ENCODE measurements at regions of chr14 and their contacts with region 1.

Region 1: DNA sequence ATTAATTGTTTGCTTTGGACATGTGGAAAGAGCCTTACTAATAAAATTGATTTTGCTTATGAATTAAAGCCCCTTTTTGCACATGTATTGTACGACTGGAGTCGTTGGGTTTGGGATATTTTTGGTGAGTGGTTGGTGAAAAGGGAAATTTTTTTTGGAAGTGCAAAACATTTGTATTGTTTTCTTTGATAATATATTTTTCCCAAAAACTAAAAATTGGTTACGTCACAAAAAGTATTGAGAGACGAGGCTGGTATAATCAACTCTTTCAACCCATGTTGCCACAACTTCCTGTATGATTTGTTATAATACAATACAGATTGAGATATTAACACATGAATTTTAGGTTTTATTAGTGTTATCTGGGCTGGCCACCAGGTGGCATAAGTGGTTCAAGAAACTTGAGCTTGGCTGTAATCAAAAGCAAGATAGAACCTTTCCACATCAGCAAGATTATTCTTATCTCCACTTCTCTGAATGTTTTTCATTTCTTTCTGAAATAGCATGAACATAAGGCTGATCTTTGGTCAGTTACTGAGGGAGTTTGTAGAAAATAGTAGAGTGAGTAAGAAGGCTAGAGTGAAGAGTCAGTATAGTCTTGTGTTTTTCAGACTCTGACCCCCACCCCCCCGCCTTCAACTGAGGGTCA is 8.7 kb downstream of the NGDN start:
- DNase-seq: peak; percentile 41 to 65 (median 62)
- H3K4me3 ChIP-seq: no peak overlapping the region
- H3K27ac ChIP-seq: no peak overlapping the region
- H3K4me1 ChIP-seq: no peaks in the 10 kb centered on the region
- H3K27me3 ChIP-seq: no peaks in the 10 kb centered on the region
- CTCF ChIP-seq: peak; percentile 40 to 87 (median 64)
- EP300 ChIP-seq: no peak
- POLR2A ChIP-seq: no peak

Region 2: DNA sequence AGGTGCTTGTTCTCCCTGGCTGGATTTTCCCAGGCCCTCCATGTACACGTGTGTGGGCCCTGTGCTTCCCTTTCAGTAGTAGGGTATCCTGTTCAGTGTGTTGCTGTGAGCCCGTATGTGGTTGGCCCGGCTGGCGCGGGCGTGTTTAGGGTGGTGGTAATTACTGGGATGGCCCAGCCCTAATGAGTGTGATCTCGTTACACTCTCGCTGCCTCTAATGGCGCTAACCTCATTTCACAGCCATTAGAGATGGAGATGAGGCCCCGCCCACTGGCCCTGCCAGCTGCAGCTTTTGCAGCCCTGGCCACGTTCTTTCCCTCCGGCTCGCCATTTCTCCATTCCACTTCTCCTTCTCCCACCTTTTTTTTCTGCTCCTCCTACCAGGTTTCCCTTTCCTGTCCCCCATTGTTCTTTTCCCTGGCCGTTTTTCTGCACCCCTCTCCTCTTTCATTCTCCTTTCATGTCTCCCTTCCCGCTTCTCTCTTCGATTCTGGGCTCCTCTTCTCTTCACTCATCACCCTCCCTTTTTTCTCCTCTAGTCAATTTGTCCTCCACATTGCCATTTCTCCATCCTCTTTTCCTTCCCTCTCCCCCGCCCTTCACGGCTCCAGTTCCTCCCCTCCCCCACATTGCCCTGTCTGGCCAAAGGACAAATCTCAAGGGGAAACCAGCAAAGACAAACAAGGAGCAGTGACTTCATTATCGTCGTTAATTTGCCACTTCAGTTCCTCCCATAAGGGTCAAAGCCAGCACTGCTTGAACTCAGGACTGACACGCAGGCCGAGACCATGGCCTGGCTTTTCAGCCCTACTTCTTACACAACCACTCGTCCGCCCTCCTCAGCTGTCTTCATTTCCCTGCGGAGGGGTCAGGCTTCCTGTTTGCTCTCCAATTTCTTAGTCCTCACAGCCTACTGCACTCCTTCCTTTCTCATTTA is 66.5 kb after region 1 on chr14:
- intact Hi-C with region 1: loop called in 3 of 4 experiments (anchors 5 to 10 kb)
- DNase-seq: no peak
- H3K4me3 ChIP-seq: no peak overlapping the region
- H3K27ac ChIP-seq: no peak overlapping the region
- H3K4me1 ChIP-seq: no peaks in the 10 kb centered on the region
- H3K27me3 ChIP-seq: no peaks in the 10 kb centered on the region
- CTCF ChIP-seq: no peak
- EP300 ChIP-seq: no peak
- POLR2A ChIP-seq: no peak

Region 3: DNA sequence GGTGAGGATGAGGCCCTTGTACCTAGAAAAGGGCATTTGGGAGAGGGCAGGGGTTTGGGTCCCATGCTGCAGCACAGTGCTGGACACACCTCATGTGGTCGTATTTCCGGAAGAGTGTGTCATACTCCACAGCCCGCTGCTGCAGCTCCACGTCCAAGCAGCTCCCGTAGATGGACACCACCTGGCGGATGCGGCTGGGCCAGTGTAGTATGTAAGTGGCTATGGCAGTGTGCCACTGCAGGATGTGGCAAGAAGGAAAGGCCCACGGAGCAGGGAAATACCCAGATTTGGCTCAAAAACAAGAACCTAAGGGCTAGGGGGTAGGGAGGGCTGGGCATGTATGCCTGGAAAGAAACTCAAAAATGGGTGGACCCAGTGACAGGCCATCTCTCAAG is 83.6 kb after region 1 on chr14:
- intact Hi-C with region 1: loop called (anchors 2 to 5 kb)
- DNase-seq: peak in 1 of 5 donors; percentile 34
- H3K4me3 ChIP-seq: no peak overlapping the region
- H3K27ac ChIP-seq: no peak overlapping the region
- H3K4me1 ChIP-seq: peaks cover 3% of the 10 kb centered on the region
- H3K27me3 ChIP-seq: no peaks in the 10 kb centered on the region
- CTCF ChIP-seq: no peak
- EP300 ChIP-seq: no peak
- POLR2A ChIP-seq: no peak

Region 4: GRCh38 chr14:23567192-23568020 is 89.2 kb after region 1 on chr14 and contains the start of gene AP1G2:
- intact Hi-C with region 1: loop called in 2 of 4 experiments (anchors 2 to 5 kb)
- DNase-seq: peak; percentile 92 to 95 (median 92)
- H3K4me3 ChIP-seq: peak within 1 kb of the TSS; percentile 73
- H3K27ac ChIP-seq: peak within 1 kb of the TSS; percentile 75 to 81
- H3K4me1 ChIP-seq: no peaks in the 10 kb centered on the region
- H3K27me3 ChIP-seq: no peaks in the 10 kb centered on the region
- CTCF ChIP-seq: no peak
- EP300 ChIP-seq: no peak
- POLR2A ChIP-seq: peak; percentile 63
- total RNA-seq, gene AP1G2: 76.3 to 129 (median 92.8) TPM

Measured in ovary (tissue), 10 donors.